ENCODE measurements at regions of chr11 and their contacts with region 1.

Region 1: DNA sequence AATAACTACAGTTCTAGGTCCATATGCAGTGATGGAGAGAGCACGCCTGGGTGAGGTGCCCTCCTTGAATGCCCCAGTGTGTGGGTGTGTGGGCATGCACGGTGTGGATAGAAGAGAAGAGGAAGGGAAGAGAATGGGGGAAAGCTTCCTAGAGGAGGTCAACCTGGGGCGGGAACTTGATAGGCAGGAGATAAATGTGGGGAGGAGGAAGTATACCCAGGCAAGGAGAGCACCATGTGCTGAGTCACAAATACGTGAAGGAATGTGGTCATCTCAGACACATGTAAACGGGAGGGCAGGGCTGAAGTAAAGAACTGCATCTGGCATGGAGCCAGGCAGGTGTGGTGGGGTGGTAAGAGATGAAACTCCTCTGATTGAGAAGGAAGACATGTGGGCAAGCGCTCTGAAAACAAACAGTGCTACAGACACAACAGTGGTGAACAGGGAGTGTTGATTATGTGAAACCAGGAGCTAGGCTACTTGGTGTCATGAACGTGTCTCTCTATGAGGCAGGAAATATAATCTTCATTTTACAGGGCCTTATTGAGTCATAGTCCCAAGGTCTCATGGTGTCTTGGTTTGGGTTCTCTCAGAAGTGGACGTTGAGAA is 61.5 kb upstream of the EED start:
- DNase-seq: no peak
- H3K4me3 ChIP-seq: no peak overlapping the region
- H3K27ac ChIP-seq: no peak overlapping the region
- H3K27me3 ChIP-seq: no peaks in the 10 kb centered on the region
- CTCF ChIP-seq: no peak

Region 2: DNA sequence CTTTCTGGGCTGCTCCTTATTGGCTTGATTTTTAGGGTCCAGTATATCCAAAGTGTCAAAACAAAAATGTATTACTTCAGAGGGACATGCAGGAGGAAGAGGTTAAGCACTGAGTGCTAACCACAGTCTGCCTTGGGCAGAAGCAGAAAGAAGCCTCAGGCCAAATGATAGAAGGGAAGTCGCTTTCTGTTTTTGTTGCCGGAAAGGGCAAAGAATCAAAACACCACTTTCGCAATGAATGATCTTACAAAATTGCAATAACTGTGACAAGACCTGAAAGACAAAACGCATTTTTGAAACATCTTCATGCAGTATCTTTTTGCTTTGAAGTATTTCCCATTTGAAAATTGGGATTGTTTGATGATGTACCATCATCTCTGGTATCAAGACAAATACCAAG is 44.1 kb before region 1 on chr11:
- CTCF ChIA-PET with region 1: no interaction called
- POLR2A ChIA-PET with region 1: no interaction called
- DNase-seq: no peak
- H3K4me3 ChIP-seq: no peak overlapping the region
- H3K27ac ChIP-seq: no peak overlapping the region
- H3K27me3 ChIP-seq: no peaks in the 10 kb centered on the region
- CTCF ChIP-seq: no peak

Region 3: DNA sequence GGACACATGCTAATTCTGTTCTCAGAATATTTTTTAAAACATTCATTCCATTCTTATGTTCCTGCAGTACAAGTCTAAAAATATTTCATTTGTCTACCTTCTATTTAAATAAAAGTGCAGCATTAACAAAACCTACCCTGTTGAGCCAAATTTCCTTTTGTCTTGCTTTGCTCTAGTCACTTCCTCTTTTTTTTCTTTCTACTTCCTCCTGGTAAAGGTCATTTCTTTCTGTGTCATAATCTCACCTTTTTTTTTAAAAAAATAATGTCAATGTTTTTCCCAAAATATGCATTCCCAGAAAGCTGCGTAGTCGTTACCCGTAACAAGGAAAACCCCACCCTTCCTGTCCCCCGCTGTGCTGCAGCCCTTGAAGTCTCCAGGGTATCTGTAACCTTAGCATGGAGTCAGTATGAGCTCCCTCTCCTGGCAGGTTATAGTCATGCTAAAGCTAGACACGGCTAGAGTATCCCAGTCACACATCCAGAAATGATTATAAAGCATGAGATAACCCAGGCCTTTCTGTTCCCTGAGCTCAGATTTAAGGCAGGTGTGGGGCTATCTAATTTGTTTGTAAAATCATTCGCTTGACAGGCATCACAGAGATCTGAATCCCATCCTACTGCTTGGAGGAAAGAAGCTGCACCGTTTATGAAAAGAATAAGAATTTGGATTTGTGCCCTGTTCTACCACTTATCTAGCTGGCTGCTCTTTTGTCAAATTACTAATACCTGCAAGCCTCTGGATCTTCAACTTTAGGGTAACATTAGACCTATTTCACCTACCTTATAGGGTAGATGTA is 10.4 kb after region 1 on chr11:
- CTCF ChIA-PET with region 1: interaction called, 14 read pairs
- POLR2A ChIA-PET with region 1: no interaction called
- DNase-seq: peak; percentile 47
- H3K4me3 ChIP-seq: no peak overlapping the region
- H3K27ac ChIP-seq: no peak overlapping the region
- H3K27me3 ChIP-seq: no peaks in the 10 kb centered on the region
- CTCF ChIP-seq: peak; percentile 85

Region 4: DNA sequence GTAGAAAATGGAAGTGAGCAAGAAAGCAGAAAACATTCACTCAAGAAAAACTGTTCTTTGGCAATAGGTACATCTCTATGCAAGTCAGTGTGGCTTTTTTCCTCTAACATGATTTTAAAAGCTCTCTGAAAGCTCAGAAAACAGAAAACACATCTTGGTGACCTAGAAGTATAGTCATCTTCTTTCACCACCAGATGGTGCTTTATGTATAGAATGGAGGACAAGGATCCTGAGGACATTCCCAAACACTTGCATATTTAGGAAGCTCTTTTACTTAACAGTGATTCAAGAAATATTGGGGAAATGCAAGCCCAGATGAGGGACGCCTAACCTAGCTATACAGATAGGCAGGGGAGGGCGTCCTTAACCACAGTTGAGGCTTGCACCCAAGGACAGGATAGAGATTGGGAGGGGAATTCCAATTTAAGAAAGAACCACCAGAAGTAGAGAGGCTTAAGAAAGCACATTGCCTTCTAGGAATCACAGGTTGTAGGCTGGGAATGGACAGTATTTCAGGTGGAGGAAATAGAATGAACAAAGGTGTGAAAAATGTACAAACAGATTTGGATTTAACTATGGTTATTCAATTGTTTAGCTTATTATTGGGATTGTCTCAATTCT is 177.8 kb after region 1 on chr11:
- CTCF ChIA-PET with region 1: no interaction called
- POLR2A ChIA-PET with region 1: no interaction called
- DNase-seq: peak; percentile 24
- H3K4me3 ChIP-seq: no peak overlapping the region
- H3K27ac ChIP-seq: no peak overlapping the region
- H3K27me3 ChIP-seq: no peaks in the 10 kb centered on the region
- CTCF ChIP-seq: peak; percentile 62